ENCODE measurements at regions of chr15 and their contacts with region 1.

Region 1: GRCh38 chr15:81480645-81481053 is 106.6 kb upstream of the TMC3 start:
- DNase-seq: no peak
- ATAC-seq: peak; percentile 57

Region 2: DNA sequence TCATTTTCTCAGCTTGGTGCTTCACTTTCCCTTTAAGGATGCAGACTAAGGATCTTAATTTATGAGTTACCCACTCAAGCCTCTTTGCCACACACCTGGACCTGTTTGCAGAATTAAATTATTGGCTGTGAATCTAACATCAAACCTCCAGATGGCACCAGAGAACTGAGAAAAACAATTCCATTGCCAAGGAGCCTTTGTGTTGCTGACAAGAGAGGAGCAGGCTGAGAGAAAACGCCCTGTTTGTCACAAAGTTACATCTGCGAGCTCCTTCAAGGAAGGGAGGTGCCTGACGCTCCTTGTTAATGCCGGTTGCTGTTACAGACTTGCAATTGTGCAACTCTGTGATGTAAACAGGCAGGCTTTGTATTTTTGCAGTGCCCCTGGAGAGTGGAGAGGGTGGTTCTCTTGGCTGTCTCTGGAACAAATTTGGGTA is 70.3 kb before region 1 on chr15:
- intact Hi-C with region 1: loop called (anchors 5 kb)
- DNase-seq: peak; percentile 65
- ATAC-seq: peak; percentile 89

Region 3: DNA sequence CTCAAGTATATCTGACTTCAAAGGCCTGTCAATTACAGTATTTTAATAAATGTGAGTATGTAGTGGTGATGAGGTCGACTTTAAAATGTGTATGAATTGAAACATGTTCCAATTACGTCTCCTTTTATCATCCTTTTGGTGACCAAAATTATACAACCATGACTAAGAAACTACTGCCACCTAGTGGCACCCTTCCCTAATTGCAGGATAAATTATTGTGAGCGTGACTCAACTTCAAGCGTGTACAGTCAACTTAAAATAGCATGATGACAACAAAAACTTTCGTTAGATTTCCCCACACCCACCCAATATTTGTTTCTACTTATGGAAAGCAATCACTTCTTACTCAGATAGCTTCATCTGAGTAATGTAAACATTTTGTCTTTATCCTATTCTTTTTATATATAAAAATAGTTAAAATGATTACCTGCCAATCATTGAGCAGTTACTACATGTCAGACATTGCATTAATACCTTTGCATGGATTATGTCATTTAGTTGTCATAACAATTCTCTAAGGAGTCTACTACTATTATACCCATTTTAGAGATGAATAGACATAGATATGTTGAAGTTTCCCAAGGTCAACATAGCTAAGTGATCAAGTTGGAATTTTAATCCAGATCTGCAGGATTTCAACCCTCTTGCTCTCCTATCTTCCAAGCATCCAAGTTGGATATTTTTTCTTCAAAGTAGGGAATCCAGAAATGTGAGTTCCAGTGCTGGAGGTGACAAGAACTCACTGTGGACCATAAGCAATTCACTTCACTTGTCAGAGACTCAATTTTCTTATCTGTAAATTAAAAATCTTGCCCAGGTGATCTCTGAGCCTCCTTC is 459.2 kb after region 1 on chr15:
- intact Hi-C with region 1: loop called (anchors 5 kb)
- DNase-seq: no peak
- ATAC-seq: no peak

Region 4: DNA sequence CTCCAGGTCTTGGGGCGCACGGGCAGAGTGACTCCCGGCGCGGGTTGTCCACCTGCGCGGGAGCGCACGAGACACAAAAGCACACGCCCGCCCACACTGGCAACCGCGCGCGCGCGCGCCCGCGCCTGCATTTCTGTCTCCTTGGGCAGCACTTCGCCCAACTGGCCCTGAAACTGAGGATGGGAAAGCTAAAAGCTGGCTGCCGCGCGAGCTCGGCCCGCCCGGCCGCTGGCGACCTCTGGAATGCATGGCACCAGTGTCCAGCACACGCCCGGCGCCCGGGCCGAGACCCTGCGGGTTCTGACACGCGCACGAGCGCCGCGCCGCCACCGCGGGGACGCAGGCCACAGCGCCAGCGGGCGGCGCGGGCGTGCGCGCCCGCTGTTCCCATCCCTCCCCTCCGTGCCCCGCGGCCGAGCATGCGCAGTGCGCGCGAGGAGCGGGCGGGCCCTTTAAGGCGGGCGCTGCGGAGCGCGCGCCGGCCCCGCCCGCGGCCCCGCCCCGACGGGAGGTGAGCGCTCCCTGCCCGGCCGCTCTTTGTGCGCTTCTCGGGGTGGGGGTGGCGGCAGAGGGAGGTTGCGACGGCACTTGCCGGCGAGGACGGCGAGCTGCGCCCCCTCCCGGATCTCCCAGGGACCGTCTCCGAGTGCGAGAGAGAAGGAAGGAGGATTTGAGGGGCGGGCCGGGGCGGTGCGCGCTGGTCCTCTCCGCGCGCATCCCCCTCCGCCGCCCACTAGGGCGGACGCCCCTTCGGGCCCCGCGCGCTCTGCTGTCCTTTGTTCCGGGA is 566.2 kb after region 1 on chr15:
- intact Hi-C with region 1: loop called (anchors 2 kb)
- DNase-seq: peak; percentile 94
- ATAC-seq: peak; percentile 85

Region 5: DNA sequence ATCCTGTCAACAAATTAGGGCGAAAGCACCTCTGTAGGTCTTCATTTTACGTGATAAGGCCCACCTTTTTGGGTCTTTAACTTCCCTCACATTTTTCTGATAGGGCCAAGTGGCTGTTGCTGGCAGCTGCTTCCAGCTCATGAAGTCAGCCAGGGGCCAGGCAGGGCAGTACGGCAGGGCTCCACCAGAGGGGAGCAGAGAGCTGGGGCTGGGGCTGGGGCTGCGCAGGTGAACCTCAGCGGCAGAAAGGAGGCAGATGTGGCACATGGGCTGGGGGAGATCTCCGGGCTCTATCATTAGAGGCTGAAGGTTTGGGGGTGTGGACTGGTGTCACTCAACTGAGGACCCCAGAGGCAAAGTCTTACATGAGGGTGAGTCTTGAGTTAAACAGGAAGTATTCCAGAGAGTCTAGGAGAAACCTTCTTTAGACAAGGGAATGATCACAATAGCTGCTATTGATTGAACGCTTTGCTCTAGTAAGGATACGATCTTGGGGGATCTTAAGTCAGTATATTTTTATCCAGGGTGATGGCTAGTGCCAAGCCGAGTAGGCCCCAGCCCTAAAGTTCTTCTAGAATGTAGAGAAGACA is 627.9 kb after region 1 on chr15:
- intact Hi-C with region 1: loop called (anchors 2 kb)
- DNase-seq: no peak
- ATAC-seq: peak; percentile 86

Region 6: DNA sequence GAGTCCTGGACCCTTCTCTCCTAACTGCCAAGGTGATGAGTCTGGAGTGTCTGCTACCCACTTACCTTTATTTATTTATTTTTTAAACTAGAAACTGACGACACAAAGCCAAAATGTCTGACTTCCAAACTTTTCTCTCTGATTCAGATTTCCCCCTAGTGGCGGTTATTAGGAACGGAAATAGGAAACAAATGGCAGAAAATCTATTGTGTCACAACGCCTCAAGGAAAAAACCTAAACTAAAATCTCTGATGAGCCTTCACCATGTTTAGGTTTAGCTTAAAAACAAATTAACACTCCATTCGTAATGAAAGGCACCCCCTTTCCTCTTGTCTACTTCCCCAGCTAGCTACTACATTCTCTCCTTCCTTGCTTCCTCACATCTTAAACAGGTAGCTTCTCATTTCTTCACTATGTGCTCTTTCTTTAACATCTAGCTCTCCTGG is 659.2 kb after region 1 on chr15:
- intact Hi-C with region 1: loop called (anchors 5 kb)
- DNase-seq: no peak
- ATAC-seq: no peak

Region 7: DNA sequence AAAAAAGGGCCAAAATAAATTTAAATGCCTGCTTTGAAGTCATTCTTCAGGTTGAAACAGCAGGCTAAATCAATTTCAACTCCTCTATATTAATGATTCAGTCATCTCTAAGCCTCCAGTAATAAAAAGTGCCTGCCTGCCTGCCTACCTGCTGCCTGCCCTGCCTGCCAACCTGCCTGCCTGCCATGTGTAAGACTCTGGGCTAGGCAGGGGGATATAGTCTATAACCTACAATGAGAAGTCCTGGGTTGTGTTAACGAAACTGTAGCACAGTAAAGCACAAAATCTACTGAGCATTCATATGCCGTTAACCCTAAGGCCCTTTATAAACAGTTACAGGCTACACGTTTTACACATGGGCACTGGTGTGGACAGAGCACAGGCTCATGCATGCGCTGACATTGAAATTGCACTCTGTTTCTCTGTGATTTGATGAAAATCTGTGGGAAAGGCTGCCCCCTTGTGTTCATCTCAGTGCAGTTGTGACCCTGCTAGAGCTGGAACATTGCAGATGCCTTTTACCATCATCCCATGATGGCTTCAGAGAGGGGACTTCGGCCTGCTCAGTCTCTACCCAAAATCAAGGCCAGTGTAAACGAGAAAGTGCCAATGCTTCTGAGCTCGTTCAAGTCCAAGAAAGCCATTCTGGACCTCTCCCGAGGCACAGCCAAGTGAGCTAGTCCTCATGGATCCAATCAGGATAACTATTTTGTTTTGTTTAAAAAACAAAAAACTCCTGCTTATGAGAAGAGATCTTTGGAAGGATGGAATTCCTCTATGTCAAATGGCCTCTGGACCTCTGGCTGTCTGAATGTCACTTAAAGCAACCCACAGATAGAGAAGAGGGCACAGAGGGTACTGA is 717.3 kb after region 1 on chr15:
- intact Hi-C with region 1: loop called (anchors 5 kb)
- DNase-seq: no peak
- ATAC-seq: peak; percentile 88

Measured in Right ventricle myocardium inferior (tissue), 1 donor.